ENCODE measurements at regions of chr6 and their contacts with region 1.

Region 1: DNA sequence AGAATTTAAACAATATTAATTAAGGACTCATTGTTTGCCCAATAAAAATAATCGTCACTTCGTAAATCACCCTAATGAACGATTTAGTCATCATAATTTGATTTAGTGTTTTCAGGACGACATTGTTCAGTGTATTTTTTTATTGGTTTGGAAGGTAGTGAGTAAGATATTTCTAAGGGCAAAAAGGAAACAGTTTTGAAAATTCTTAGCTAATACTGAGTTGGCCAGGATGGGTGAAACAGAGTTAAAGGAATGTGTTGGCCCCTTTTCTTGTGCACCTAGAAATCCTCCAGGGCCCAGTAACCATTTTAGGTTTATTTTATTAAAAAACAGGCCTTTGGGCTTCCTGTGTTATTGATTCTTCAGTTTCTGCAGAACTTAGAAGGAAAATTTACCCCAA is 25.3 kb downstream of the ANKS1A start:
- DNase-seq: no peak
- ATAC-seq: no peak

Region 2: GRCh38 chr6:34947551-34947950 is 33.2 kb after region 1 on chr6:
- intact Hi-C with region 1: loop called (anchors 2 kb)
- DNase-seq: no peak
- ATAC-seq: no peak

Region 3: DNA sequence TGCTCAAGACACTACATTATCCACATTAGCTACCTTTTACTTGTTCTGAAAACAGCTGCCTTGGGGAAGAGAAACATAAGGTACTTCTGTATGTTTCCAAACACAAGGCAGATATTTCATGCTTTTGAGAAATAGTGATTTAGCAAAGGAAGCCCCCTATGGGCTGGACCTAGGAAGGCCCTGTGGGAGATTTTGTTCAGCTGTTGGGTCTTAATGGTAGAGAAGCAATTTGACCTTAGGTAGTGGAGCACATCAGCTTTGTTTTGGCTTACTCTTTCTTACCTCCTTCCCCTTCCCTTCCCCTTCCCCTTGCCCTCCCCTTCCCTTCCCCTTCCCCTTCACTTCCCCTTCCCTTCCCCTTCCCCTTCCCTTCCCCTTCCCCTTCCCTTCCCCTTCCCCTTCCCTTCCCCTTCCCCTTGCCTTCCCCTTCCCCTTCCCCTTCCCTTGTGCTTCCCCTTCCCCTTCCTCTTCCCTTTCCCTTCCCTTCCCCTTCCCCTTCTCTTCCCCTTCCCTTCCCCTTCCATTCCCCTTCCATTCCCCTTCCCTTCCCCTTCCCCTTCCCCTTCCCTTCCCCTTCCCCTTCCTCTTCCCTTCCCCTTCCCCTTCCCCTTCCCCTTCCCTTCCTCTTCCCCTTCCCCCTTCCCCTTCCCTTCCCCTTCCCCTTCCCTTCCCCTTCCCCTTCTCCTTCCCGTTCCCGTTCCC is 59.3 kb after region 1 on chr6:
- intact Hi-C with region 1: no loop called
- DNase-seq: no peak
- ATAC-seq: no peak

Region 4: DNA sequence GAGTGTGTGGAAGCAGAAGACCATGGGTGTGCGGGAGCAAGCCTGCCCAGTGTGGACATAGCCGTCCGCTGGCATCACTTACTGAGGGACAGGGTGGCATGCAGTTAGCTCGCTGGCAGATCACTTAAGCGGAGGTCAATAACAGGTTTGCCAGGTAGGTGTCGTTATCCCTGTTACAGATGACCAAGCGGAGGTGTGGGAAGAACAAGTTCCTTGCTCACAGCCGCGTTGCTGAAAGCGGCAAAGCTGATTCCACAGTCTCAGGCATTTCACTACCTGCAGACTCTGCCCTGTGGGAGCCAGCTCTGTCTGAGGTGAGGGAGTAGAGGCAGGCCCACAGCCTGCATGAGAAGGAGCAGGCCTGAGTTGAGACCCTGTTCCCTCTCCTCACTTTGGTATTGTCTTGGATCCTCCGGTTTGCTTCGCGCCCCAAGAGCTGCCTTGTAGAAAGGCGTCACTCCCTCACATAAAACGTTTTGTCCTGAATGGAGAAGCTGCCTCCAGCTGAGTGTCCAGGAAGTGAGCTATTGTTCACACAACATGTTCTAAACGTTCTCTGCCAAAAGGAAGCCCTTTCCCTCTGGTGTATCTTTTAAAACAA is 129.9 kb after region 1 on chr6:
- intact Hi-C with region 1: no loop called
- DNase-seq: no peak
- ATAC-seq: peak; percentile 53